ENCODE measurements at regions of chr19 and their contacts with region 1.

Region 1: GRCh38 chr19:47243776-47244547 is 12.4 kb upstream of the CCDC9 start:
- DNase-seq: peak; percentile 91 to 94
- ATAC-seq: peak; percentile 92 to 96 (median 94)
- H3K4me3 ChIP-seq: peak overlapping the region in 8 of 10 donors; percentile 12 to 43 (median 34)
- H3K27ac ChIP-seq: peak overlapping the region in 8 of 10 donors; percentile 8 to 70 (median 50)
- H3K4me1 ChIP-seq: peaks cover 3 to 54% (median 39%) of the 10 kb centered on the region in 9 donors
- H3K27me3 ChIP-seq: peaks cover 0 to 40% (median 0%) of the 10 kb centered on the region in 7 donors
- CTCF ChIP-seq: peak; percentile 98 to 100 (median 99)

Region 2: DNA sequence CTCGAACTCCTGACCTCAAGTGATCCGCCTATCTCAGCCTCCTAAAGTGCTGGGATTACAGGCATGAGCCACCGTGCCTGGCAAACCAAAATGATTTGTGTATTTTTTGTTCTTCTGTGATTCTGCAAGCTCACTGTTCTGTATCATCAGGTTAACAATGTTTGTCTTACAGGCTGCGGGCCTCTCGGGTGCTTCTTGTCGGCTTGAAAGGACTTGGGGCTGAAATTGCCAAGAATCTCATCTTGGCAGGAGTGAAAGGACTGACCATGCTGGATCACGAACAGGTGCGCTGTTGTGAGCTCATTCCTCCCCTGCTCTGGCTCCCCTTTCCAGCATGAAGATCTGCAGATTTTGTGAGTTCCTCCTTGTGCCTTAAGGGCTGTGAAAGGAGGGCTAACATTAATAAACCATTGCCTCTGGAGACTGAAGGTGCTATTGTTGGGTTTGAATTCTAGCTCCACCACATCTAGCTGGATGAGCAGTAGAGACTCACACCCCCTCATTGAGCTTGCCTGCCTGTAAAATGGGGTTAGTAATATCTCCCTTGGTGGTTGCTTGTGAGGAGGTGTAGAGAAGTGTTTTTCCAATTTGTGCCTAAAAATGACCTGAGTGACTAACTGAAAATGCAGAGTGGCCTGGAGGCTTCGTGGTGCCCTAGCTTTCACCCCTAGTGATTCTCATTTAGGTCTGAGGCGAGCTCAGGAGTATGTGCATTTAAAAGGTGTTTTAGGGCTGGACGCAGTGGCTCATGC is 100.5 kb before region 1 on chr19:
- intact Hi-C with region 1: loop called in 5 of 10 experiments (anchors 2 to 5 kb)
- DNase-seq: no peak
- ATAC-seq: no peak
- H3K4me3 ChIP-seq: no peak overlapping the region
- H3K27ac ChIP-seq: no peak overlapping the region
- H3K4me1 ChIP-seq: peaks cover 0 to 9% (median 0%) of the 10 kb centered on the region in 9 donors
- H3K27me3 ChIP-seq: no peaks in the 10 kb centered on the region
- CTCF ChIP-seq: no peak

Region 3: DNA sequence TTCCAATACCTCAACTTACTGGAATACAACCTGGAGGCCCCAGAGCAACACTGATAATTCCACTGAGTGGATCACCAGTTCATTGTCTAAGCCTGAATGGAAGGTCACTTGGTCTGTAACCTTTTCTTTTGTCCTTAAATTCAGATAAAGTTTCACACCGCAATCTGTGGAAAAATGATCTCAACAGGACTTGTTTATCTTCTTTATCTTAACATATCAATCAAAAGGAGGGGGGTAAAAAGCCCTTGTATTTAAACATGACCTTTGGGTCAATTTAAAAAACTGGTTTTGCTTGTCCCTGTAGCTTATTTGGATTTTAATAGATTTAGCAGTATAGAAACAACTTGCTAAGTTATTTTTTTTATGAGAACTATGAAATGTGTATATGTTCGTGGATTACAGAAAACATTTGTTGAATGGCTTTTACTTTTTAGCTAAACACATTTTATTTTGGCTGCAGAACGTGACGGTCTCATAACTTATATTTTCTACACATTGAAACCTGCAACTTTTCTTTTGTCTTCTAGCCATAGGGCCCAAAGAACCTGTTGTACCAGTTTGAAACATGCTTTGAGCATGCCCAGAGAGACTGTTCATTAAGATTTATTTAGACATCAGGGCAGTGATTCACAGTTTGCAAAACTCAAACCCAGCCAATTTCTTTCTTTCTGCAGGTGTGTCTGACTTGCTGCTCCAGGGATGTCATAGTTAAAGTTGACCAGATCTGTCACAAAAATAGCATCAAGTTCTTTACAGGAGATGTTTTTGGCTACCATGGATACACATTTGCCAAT is 91.5 kb before region 1 on chr19:
- intact Hi-C with region 1: loop called (anchors 1 to 5 kb)
- DNase-seq: no peak
- ATAC-seq: no peak
- H3K4me3 ChIP-seq: no peak overlapping the region
- H3K27ac ChIP-seq: no peak overlapping the region
- H3K4me1 ChIP-seq: peaks cover 6 to 41% (median 24%) of the 10 kb centered on the region in 9 donors
- H3K27me3 ChIP-seq: no peaks in the 10 kb centered on the region
- CTCF ChIP-seq: no peak

Region 4: GRCh38 chr19:47190167-47190727 is 53.7 kb before region 1 on chr19:
- intact Hi-C with region 1: loop called in 1 of 10 experiments (anchors 10 kb)
- DNase-seq: peak; percentile 32 to 35
- ATAC-seq: peak; percentile 31 to 68 (median 60)
- H3K4me3 ChIP-seq: peak overlapping the region in 3 of 10 donors; percentile 2 to 28 (median 13)
- H3K27ac ChIP-seq: peak overlapping the region; percentile 2 to 82 (median 72)
- H3K4me1 ChIP-seq: peaks cover 7 to 25% (median 21%) of the 10 kb centered on the region in 9 donors
- H3K27me3 ChIP-seq: no peaks in the 10 kb centered on the region
- CTCF ChIP-seq: no peak

Region 5: DNA sequence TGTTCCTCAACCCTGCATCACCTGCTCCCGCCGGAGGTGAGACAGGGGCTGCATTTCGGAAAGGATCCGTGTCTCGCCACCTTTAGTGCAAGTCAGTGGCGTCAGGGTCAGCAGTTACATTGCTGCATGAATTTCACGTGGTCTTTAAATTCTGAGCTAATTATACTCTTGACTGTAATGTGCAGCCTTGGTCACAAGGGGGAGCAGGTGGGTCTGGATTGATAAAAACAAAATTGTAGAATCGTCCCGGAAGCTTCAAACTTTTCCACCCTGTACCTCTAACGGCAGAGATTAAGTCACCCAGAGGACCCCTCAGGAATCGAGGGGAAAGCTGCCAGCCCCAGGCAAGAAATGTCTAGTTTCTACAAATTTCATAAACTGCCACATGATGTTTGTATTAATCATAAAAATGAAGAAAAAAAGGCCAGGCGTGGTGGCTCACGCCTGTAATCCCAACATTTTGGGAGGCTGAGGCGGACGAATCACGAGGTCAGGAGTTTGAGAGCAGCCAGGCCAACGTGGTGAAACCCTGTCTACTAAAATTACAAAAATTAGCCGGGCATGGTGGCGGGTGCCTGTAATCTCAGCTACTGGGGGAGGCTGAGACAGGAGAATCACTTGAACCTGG is 33.2 kb before region 1 on chr19:
- intact Hi-C with region 1: loop called in 9 of 10 experiments (anchors 1 to 5 kb)
- DNase-seq: peak; percentile 35 to 88
- ATAC-seq: peak; percentile 38 to 77 (median 74)
- H3K4me3 ChIP-seq: no peak overlapping the region
- H3K27ac ChIP-seq: peak overlapping the region in 6 of 10 donors; percentile 32 to 73 (median 56)
- H3K4me1 ChIP-seq: peaks cover 4 to 25% (median 13%) of the 10 kb centered on the region in 9 donors
- H3K27me3 ChIP-seq: no peaks in the 10 kb centered on the region
- CTCF ChIP-seq: peak; percentile 71 to 91 (median 85)

Region 6: DNA sequence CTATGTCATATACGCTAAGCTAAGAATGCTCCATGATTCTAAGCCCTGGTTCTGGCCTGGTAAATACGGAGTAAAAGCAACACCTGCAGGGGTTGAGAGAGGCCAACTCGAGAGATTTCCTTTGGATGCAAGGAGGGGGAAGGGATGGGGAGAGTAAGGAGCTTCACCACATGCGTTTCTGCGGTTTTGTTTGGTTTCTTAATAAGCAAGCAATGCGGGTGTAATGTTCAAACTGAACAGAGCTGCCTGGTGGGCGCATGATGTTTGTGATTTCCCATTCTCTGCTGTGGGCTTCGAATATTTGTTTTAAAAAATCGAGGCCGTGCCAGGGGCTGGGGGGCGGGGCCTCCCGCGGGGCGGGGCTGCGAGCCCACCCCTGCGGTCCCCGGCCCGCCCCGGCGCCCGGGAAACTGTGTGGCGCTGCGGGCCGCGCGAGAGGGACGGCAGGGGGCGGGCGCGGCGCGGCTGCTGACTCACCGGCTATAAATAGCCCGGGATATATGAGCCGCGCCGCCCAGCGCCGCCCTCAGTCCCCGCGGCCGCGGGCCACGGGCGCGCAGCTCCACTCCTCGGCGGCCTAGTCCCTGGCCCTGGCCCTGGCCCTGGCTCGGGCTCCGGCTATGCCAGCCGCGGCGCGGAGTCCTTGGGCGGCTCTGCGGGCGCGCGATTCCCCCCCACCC is 18.1 kb before region 1 on chr19:
- intact Hi-C with region 1: loop called in 2 of 10 experiments (anchors 2 kb)
- DNase-seq: peak; percentile 89 to 91
- ATAC-seq: peak; percentile 56 to 88 (median 73)
- H3K4me3 ChIP-seq: peak overlapping the region; percentile 39 to 99 (median 94)
- H3K27ac ChIP-seq: peak overlapping the region; percentile 96 to 100 (median 100)
- H3K4me1 ChIP-seq: peaks cover 7 to 47% (median 34%) of the 10 kb centered on the region in 9 donors
- H3K27me3 ChIP-seq: no peaks in the 10 kb centered on the region
- CTCF ChIP-seq: peak; percentile 18 to 71 (median 48)

Measured in heart right ventricle (tissue), 16 donors.